Head of caudate nucleus (tissue), 42 donors: ENCODE measurements at regions of chr10 and their contacts with region 1.

Region 1: GRCh38 chr10:129864601-129865126 is 99.4 kb downstream of the EBF3 start:
- DNase-seq: no peak

Region 2: GRCh38 chr10:129344731-129345355 is 519.8 kb before region 1 on chr10:
- intact Hi-C with region 1: loop called (anchors 5 kb)
- DNase-seq: no peak

Region 3: GRCh38 chr10:129972145-129972965 is 107.7 kb after region 1 on chr10:
- intact Hi-C with region 1: no loop called
- DNase-seq: peak in 3 of 42 donors; percentile 20 to 28 (median 21)